HAP-1 (cell line): ENCODE measurements at regions of chr15 and their contacts with region 1.

Region 1: DNA sequence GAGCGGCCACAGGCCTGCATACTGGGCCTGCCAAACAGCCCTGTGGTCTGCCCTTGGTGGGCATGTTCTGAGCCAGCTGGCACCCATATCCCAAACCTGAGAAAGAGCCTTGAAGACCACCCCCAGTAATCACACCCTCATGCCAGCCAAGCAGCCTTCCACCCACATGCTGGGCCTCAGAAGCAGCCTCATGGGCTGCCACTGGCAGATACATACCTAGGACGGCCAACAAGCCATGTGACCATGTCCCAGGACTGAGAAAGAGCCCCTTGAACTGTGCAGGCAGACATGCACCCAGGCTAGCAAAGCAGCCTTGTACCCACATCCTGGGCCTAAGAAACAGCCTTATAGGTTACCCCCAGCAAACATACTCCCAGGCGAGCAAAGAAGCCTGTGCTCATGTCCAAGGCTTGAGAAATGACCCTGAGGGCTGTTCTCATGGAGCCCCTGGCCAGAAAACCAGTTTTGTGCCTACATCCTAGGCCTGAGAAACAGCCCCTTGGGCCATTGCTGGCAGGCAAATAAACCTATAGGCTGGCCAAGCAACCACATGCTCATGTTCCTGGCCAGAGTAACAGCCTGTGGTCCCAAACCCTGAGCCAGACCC is 24.9 kb downstream of the TUBGCP5 start:
- DNase-seq: no peak
- H3K4me3 ChIP-seq: no peak overlapping the region
- H3K4me1 ChIP-seq: no peaks in the 10 kb centered on the region
- H3K27me3 ChIP-seq: no peaks in the 10 kb centered on the region

Region 2: DNA sequence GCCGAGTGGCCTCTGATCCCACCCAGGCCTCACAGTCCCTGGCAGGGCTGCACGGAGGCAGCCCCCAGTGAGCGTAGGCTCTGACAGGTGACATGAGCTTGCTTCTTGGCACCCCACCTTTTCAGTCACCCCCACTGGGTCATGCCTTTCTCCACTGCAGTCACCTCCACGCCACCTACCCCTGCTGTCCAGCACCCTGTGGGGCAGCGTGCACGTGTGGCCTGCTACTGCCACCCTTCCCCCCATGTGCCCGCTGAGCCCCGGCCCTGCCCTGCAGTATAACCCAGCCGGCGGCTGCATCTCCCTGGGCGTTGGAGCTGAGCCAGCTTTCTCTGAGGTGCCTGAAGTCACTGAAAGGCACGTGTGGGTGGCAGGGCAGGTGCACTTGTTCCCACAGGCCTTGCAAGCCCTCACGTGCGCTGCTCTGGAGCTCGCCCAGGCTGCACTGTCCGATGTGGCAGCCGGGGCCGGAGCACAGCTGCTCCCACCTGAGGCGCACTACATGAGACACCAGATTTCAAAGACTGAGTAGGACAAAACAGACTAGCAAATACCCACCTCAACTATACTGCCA is 110.4 kb before region 1 on chr15:
- in situ Hi-C with region 1: loop called (anchors 10 kb)
- DNase-seq: no peak
- H3K4me3 ChIP-seq: no peak overlapping the region
- H3K4me1 ChIP-seq: no peaks in the 10 kb centered on the region
- H3K27me3 ChIP-seq: no peaks in the 10 kb centered on the region

Region 3: GRCh38 chr15:22936577-22937472 is 77.7 kb before region 1 on chr15:
- in situ Hi-C with region 1: loop called (anchors 10 kb)
- DNase-seq: no peak
- H3K4me3 ChIP-seq: no peak overlapping the region
- H3K4me1 ChIP-seq: peaks cover 4% of the 10 kb centered on the region
- H3K27me3 ChIP-seq: no peaks in the 10 kb centered on the region